ENCODE measurements at regions of chr2 and their contacts with region 1.

Region 1: DNA sequence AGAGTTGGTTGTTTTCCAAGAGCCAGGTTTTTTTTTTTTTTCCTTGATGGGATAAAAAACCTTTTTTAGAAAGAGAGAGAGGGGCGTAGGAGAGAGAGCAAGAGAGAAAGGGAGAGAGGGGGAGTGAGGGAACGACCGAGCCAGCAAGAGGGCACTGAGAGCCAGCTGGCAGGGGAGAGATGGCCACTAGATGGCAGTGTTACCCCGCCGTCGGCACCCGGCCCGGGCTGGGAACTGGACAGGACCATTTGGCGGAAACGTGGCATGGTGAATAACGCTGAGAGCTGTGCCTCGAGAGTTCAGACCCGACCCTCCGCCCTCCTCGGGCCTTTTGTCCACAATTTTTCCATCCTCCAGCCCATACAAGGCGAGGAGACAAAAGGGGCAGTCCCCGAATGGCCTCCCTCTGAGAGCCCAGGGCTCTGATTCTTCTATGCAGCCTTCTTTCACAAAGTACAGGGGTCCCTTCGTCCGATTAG is 286.7 kb upstream of the VRK2 start:
- DNase-seq: peak; percentile 83 to 93
- H3K4me3 ChIP-seq: peak overlapping the region; percentile 20
- H3K4me3 Mint-ChIP-seq: peak overlapping the region; percentile 68
- H3K27ac Mint-ChIP-seq: no peak overlapping the region
- H3K4me1 ChIP-seq: no peaks in the 10 kb centered on the region
- H3K4me1 Mint-ChIP-seq: peaks cover 11% of the 10 kb centered on the region
- H3K27me3 ChIP-seq: no peaks in the 10 kb centered on the region
- H3K27me3 Mint-ChIP-seq: peaks cover 6% of the 10 kb centered on the region
- CTCF ChIP-seq: peak; percentile 94 to 98

Region 2: DNA sequence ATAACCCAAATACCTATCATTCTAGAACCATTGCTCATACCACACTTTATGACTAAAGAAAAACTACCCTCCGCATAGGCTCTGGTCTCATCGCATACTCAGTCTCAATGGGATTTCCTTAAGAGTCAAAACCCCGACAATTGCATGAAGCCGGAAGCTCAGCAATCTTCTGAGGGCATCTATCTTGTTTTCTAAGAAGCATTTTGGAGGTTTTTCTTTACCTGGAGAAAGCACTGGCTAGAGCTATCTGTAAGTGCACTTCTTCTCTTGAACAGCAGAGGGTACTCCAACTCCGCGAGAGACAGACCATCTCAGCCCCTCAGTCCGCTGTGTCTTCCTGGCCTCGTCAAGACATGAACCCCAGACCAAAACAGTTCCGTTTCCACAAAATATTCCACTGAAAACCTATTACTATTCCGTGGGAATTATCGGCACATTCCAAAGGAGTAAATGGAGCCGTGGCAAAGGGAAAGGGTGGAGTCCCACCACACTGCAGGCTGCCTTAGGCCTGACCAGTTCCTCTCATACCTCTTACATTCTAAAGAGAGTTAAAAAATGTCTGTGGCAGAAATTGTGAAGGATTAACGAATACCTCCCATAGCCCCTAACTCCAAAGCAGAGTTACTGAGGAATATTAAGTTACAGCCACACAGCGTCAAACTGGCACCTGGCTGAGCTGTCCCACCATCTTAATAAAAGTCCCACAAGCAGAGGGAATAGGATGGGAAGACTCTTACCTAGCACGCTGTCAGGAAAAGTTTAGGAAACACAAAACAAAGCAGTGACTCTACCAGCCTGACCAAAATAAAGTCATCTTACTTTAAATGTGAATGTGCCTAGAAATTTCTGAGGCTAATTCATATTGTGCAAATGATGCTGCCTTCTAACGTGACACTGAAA is 38.9 kb before region 1 on chr2:
- CTCF ChIA-PET with region 1: interaction called, 7 read pairs
- POLR2A ChIA-PET with region 1: no interaction called
- intact Hi-C with region 1: loop called (anchors 2 kb)
- DNase-seq: peak; percentile 60 to 64
- H3K4me3 ChIP-seq: no peak overlapping the region
- H3K4me3 Mint-ChIP-seq: peak overlapping the region; percentile 56
- H3K27ac Mint-ChIP-seq: no peak overlapping the region
- H3K4me1 ChIP-seq: no peaks in the 10 kb centered on the region
- H3K4me1 Mint-ChIP-seq: no peaks in the 10 kb centered on the region
- H3K27me3 ChIP-seq: no peaks in the 10 kb centered on the region
- H3K27me3 Mint-ChIP-seq: no peaks in the 10 kb centered on the region
- CTCF ChIP-seq: peak; percentile 83

Region 3: DNA sequence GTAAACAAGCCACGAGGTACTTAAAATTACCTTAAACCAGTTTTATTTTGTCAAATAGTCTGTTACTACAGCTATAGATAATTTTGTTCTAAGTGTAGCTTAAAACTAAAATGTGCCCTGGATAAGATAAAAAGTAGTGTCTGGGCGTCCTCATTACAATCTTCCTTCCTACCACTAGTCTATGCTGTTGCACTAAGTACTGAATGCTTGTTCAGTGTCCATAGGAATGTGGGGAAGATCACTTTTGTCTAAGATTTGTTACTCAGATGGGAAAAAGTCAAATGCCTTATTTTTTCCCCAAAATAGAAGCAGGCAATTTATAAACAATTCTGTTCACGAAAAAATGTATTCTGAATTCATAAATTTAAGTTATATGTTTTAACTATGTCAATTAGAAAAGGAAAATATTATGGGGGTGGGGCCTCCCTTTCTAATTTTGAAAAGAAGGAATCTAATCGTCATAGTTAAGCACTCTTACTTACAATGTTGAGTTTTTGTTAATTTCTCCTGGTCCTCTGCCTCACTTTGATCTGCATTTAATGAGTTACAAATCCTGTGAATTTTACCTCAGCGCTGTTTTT is 146.4 kb after region 1 on chr2:
- CTCF ChIA-PET with region 1: no interaction called
- POLR2A ChIA-PET with region 1: no interaction called
- intact Hi-C with region 1: loop called (anchors 1 kb)
- DNase-seq: peak in 1 of 2 experiments; percentile 44
- H3K4me3 ChIP-seq: no peak overlapping the region
- H3K4me3 Mint-ChIP-seq: no peak overlapping the region
- H3K27ac Mint-ChIP-seq: no peak overlapping the region
- H3K4me1 ChIP-seq: no peaks in the 10 kb centered on the region
- H3K4me1 Mint-ChIP-seq: no peaks in the 10 kb centered on the region
- H3K27me3 ChIP-seq: no peaks in the 10 kb centered on the region
- H3K27me3 Mint-ChIP-seq: no peaks in the 10 kb centered on the region
- CTCF ChIP-seq: peak; percentile 69 to 90

Region 4: DNA sequence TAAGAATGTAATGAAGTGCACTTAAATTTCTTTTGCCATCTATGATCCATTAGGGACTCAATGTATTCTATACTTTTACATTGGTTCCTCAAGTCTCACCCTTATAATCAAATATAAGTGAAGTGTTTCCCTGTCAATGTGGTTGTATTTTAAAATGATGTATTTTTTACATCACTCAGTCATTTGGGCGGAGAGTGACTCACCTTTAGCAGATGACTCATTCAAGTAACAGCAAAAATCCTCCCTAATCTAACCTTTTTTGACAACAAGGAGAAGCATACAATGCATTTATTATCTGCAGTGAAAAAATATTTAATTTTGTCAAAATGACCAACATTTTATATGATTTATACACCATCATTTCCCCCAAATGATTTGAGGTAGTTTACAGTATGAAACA is 386.8 kb after region 1 on chr2:
- CTCF ChIA-PET with region 1: no interaction called
- POLR2A ChIA-PET with region 1: no interaction called
- intact Hi-C with region 1: loop called (anchors 5 kb)
- DNase-seq: no peak
- H3K4me3 ChIP-seq: no peak overlapping the region
- H3K4me3 Mint-ChIP-seq: no peak overlapping the region
- H3K27ac Mint-ChIP-seq: no peak overlapping the region
- H3K4me1 ChIP-seq: no peaks in the 10 kb centered on the region
- H3K4me1 Mint-ChIP-seq: no peaks in the 10 kb centered on the region
- H3K27me3 ChIP-seq: no peaks in the 10 kb centered on the region
- H3K27me3 Mint-ChIP-seq: no peaks in the 10 kb centered on the region
- CTCF ChIP-seq: no peak

Region 5: GRCh38 chr2:58448065-58448507 is 688.2 kb after region 1 on chr2:
- CTCF ChIA-PET with region 1: interaction called, 23 read pairs
- POLR2A ChIA-PET with region 1: interaction called, 3 read pairs
- intact Hi-C with region 1: loop called (anchors 1 kb)
- DNase-seq: peak; percentile 77 to 78
- H3K4me3 ChIP-seq: no peak overlapping the region
- H3K4me3 Mint-ChIP-seq: no peak overlapping the region
- H3K27ac Mint-ChIP-seq: no peak overlapping the region
- H3K4me1 ChIP-seq: no peaks in the 10 kb centered on the region
- H3K4me1 Mint-ChIP-seq: no peaks in the 10 kb centered on the region
- H3K27me3 ChIP-seq: no peaks in the 10 kb centered on the region
- H3K27me3 Mint-ChIP-seq: peaks cover 4% of the 10 kb centered on the region
- CTCF ChIP-seq: peak in 1 of 2 experiments; percentile 73

Region 6: GRCh38 chr2:59025157-59025757 is 1265.4 kb after region 1 on chr2:
- CTCF ChIA-PET with region 1: no interaction called
- POLR2A ChIA-PET with region 1: no interaction called
- intact Hi-C with region 1: loop called (anchors 5 kb)
- DNase-seq: peak; percentile 39 to 57
- H3K4me3 ChIP-seq: no peak overlapping the region
- H3K4me3 Mint-ChIP-seq: no peak overlapping the region
- H3K27ac Mint-ChIP-seq: no peak overlapping the region
- H3K4me1 ChIP-seq: no peaks in the 10 kb centered on the region
- H3K4me1 Mint-ChIP-seq: no peaks in the 10 kb centered on the region
- H3K27me3 ChIP-seq: no peaks in the 10 kb centered on the region
- H3K27me3 Mint-ChIP-seq: peaks cover 2% of the 10 kb centered on the region
- CTCF ChIP-seq: peak; percentile 76 to 89

Measured in Caco-2 (cell line).